ENCODE measurements at regions of chr7 and their contacts with region 1.

Region 1: DNA sequence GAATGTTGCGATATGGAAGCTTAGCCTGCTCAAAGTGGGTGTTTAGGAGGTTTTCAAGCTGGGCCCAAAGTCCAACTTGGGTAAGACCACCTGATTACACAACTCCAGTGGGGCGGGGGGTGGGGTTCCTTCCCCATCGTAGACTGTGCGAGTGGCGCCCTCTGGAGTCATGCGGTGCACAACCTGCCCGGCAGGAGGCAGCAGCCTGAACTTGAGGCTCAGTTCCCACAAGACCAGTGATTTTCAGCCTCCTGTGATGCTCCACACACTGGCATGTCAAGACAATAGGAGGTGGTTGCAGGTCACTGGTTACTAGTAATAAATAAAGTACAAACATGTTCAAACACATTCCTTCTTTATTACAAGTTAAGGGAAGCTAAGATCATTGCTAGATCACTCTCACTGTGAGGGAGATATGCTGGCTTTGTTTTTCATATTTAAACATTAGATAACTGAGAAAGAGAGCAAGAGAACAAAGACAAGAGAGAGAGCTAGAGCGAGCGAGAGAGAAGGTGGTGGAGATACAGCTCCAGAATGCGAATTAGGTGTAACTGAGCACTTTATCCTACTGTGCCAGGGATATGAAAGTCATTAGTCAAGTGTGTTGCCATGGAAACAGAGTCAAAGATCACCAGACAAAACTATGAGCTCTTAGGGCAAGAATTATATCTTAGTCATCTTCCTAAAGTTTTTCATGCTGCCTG is 97.4 kb upstream of the BMPER start:
- H3K4me3 ChIP-seq: no peak overlapping the region
- H3K27ac ChIP-seq: no peak overlapping the region
- H3K4me1 ChIP-seq: peaks cover 8% of the 10 kb centered on the region
- CTCF ChIP-seq: peak; percentile 25; the same call in 1 of the 2 replicates

Region 2: GRCh38 chr7:33794959-33795358 is 13.0 kb before region 1 on chr7:
- CTCF ChIA-PET with region 1: interaction called, 16 read pairs
- POLR2A ChIA-PET with region 1: no interaction called
- H3K4me3 ChIP-seq: no peak overlapping the region
- H3K27ac ChIP-seq: no peak overlapping the region
- H3K4me1 ChIP-seq: peaks cover 4% of the 10 kb centered on the region
- CTCF ChIP-seq: no peak

Measured in HEK293 (cell line).